SK-N-SH (cell line): ENCODE measurements at regions of chr1 and their contacts with region 1.

Region 1: DNA sequence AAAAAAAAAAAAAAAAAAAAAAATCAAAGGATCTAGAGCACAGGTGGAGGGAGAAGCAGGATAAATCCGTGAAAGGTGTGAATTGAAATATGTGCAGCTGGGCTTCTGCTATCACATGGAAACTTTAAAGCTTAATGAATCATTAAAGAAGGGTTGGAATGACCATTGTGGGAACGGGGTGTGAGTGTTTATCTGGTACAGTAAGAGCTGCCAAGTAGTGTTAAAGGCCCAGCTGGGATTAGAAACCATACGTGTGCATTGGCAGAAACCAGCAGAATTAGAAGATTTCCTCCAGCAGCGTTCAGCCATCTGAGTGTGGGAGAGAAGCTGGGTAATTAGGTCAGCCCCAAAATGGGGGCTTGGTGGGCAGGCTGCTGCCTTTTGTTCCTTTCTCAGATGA is 13.5 kb downstream of the FALEC start:
- DNase-seq: no peak
- H3K4me3 ChIP-seq: no peak overlapping the region
- H3K27ac ChIP-seq: no peak overlapping the region
- H3K4me1 ChIP-seq: peaks cover 4 to 5% of the 10 kb centered on the region in 2 experiments; a peak in 1 of 4 replicates
- H3K27me3 ChIP-seq: no peaks in the 10 kb centered on the region
- CTCF ChIP-seq: no peak
- EP300 ChIP-seq: no peak
- RAD21 ChIP-seq: no peak

Region 2: DNA sequence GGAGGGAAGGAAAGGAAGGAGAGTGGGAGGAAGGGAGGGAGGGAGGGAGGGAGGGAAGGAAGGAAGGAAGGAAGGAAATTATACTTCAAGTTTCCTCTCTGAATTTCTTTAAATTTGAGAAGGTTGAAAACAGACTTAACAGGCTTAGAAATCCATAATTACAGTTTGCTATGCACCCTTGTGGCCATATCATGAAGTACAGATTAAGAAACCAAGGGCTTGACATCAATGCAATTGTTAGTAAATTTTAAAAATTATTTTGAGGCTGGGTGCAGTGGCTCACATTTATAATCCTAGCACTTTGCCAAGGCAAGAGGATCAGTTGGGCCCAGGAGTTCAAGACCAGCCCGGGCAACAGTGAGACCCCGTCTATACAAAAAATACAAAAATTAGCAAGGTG is 307.5 kb before region 1 on chr1:
- CTCF ChIA-PET with region 1: no interaction called
- POLR2A ChIA-PET with region 1: no interaction called
- DNase-seq: peak; percentile 35
- H3K4me3 ChIP-seq: no peak overlapping the region; a peak in 1 of 4 replicates
- H3K27ac ChIP-seq: no peak overlapping the region
- H3K4me1 ChIP-seq: no peaks in the 10 kb centered on the region
- H3K27me3 ChIP-seq: no peaks in the 10 kb centered on the region
- CTCF ChIP-seq: peak; percentile 63
- EP300 ChIP-seq: no peak
- RAD21 ChIP-seq: peak; percentile 26

Region 3: DNA sequence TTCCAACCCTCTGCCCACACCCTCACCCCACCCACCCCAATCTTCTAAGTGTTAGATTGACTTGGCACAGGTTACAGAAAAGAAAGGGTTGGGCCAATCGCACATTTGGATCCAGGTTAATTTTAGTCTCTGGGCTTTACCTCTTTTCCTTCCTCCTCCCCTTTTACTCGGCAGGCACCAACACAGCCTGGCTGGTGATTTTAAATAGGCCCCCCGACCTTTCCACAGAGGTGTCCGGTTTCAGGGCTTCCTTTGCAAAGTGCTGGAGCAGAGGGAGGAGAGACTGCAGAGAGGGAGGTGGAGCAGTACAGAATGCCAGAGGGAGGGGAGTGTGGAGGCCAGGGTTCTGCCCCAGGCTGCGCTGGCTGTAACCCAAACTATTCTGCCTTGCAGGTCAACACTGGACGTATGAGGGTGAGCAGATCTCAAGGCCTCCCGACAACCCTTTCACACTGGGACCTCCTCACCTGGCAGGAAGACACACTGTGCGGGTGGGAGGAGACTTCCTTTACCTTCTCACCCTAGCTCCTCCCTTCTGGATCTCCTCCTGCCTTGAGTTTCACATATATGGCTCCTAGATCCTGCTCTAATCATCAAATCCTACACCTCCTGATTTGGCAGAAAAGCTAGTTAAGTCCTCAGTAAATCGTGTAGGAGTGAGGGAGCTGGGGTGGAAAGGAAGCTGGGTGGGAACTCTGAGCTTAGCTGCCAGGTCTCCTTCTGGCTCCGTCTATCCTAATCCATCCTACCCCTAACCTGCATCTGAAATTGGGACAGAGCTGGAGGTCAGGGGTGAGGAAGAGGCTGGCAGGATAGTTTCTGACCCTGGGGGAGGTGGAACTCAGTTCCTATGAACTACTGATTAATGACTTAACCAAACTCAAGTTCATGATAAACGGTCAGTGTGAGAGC is 269.0 kb before region 1 on chr1:
- CTCF ChIA-PET with region 1: interaction called, 11 read pairs
- POLR2A ChIA-PET with region 1: no interaction called
- DNase-seq: peak; percentile 21
- H3K4me3 ChIP-seq: no peak overlapping the region
- H3K27ac ChIP-seq: peak overlapping the region in 1 of 2 experiments; percentile 17; a peak in 1 of 4 replicates
- H3K4me1 ChIP-seq: peaks cover 17 to 21% of the 10 kb centered on the region in 2 experiments; a peak in 3 of 4 replicates
- H3K27me3 ChIP-seq: no peaks in the 10 kb centered on the region
- CTCF ChIP-seq: no peak
- EP300 ChIP-seq: no peak
- RAD21 ChIP-seq: no peak

Region 4: GRCh38 chr1:150464422-150464826 is 64.6 kb before region 1 on chr1:
- CTCF ChIA-PET with region 1: interaction called, 21 read pairs
- POLR2A ChIA-PET with region 1: no interaction called
- DNase-seq: peak; percentile 75
- H3K4me3 ChIP-seq: no peak overlapping the region
- H3K27ac ChIP-seq: no peak overlapping the region
- H3K4me1 ChIP-seq: no peaks in the 10 kb centered on the region
- H3K27me3 ChIP-seq: no peaks in the 10 kb centered on the region
- CTCF ChIP-seq: peak; percentile 82
- EP300 ChIP-seq: no peak
- RAD21 ChIP-seq: peak; percentile 80

Region 5: DNA sequence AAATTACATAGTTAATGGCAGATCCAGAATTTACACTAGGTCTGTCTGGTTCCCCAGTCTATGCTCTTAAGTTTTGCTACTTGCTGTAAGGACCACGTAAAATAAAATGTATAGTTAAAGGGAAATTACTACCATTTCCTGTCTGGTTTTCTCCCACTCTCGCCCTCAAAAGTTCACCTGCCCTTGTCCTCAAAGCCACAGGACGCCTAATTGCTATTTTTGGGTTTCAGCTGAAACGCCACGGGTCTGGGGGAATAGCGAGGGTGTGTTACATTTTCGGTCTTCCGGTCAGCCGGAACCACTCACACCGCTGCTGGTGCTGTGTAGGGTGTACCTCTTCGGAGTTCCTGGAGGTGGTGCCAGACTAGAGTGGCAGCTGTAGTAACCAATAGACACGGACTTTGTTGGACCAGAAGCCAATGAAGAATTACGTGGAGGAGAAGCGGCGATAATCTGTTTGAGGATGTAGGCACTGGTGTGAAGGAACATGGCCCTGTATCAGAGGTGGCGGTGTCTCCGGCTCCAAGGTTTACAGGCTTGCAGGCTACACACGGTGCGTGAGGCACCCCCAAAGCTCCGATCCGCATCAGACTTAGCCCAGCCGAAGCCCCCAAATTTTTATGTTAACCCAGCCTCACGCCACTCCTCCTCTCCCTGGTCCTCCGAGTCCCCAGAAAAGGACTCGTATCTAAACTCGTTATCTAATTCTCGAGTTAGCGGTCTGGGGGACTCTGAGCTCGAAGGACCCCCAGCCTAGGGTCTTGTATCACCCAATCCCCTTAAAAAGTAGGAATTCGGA is 41.9 kb before region 1 on chr1 and contains the start of gene TARS2:
- CTCF ChIA-PET with region 1: interaction called, 12 read pairs
- POLR2A ChIA-PET with region 1: no interaction called
- DNase-seq: peak; percentile 93
- H3K4me3 ChIP-seq: peak within 1 kb of the TSS; percentile 77 to 87
- H3K27ac ChIP-seq: peak within 1 kb of the TSS; percentile 48 to 77; a peak in 3 of 4 replicates
- H3K4me1 ChIP-seq: peaks cover 5 to 12% of the 10 kb centered on the region in 2 experiments; a peak in 2 of 4 replicates
- H3K27me3 ChIP-seq: no peaks in the 10 kb centered on the region
- CTCF ChIP-seq: no peak
- EP300 ChIP-seq: no peak
- RAD21 ChIP-seq: no peak
- polyA plus RNA-seq, gene TARS2: 22.2 and 22.7 TPM in 2 replicates

Region 6: DNA sequence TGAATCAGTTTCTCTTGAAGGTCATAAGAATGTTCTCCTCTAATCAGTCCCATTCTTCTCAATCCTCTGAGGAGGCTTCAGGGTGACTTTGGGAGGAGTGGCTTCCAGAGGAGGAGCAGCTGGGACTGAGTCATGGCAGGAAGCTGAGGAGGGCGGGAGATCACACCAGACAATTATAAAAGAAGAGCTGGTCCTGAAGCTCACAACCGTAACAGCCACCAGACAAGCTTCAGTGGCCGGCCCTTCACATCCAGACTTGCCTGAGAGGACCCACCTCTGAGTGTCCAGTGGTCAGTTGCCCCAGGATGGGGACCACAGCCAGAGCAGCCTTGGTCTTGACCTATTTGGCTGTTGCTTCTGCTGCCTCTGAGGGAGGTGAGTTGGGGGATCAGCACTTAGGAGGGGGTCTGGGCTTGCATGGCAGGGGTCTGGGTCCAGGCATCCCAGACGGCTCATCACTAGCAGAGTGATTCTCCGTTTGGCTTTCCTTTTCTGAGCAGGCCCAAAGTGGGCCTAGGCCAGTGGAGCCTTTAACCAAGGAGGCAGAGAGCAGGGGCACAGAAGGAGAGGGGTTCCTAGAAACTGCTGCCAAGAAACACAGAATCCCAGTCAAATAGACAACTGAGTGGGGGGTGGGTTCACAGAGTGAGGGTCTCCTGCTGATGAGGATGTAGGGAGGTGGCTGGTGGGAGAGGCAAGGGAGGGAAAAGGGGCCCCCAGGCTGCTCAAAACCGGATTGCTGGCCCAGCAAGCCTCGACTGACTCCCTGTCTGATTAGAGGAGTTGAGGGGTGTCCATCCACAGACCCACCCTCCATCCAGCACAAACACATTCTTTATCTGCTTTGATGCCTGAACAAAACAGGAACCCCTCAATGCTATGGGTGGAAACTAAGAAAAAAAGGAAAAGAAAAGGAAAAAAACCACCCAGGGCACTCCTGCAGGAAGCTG is 20.8 kb before region 1 on chr1 and contains the start of gene ECM1:
- CTCF ChIA-PET with region 1: interaction called, 29 read pairs
- POLR2A ChIA-PET with region 1: no interaction called
- DNase-seq: no peak
- H3K4me3 ChIP-seq: peak within 1 kb of the TSS; percentile 7 to 55; a peak in 3 of 4 replicates
- H3K27ac ChIP-seq: peak within 1 kb of the TSS; percentile 63 to 75
- H3K4me1 ChIP-seq: peaks cover 6 to 13% of the 10 kb centered on the region in 2 experiments; a peak in 2 of 4 replicates
- H3K27me3 ChIP-seq: no peaks in the 10 kb centered on the region
- CTCF ChIP-seq: no peak
- EP300 ChIP-seq: no peak
- RAD21 ChIP-seq: no peak
- polyA plus RNA-seq, gene ECM1: 20.2 and 32.3 TPM in 2 replicates

Region 7: GRCh38 chr1:150515328-150516048 is 13.5 kb before region 1 on chr1 and contains the start of gene FALEC:
- CTCF ChIA-PET with region 1: interaction called, 34 read pairs
- POLR2A ChIA-PET with region 1: interaction called, 5 read pairs
- DNase-seq: peak; percentile 99
- H3K4me3 ChIP-seq: peak within 1 kb of the TSS; percentile 59 to 70
- H3K27ac ChIP-seq: peak within 1 kb of the TSS; percentile 58 to 80
- H3K4me1 ChIP-seq: peaks cover 2 to 4% of the 10 kb centered on the region in 2 experiments; a peak in 1 of 4 replicates
- H3K27me3 ChIP-seq: no peaks in the 10 kb centered on the region
- CTCF ChIP-seq: no peak
- EP300 ChIP-seq: no peak
- RAD21 ChIP-seq: no peak
- polyA plus RNA-seq, gene FALEC: 0.50 and 0.72 TPM in 2 replicates

Region 8: DNA sequence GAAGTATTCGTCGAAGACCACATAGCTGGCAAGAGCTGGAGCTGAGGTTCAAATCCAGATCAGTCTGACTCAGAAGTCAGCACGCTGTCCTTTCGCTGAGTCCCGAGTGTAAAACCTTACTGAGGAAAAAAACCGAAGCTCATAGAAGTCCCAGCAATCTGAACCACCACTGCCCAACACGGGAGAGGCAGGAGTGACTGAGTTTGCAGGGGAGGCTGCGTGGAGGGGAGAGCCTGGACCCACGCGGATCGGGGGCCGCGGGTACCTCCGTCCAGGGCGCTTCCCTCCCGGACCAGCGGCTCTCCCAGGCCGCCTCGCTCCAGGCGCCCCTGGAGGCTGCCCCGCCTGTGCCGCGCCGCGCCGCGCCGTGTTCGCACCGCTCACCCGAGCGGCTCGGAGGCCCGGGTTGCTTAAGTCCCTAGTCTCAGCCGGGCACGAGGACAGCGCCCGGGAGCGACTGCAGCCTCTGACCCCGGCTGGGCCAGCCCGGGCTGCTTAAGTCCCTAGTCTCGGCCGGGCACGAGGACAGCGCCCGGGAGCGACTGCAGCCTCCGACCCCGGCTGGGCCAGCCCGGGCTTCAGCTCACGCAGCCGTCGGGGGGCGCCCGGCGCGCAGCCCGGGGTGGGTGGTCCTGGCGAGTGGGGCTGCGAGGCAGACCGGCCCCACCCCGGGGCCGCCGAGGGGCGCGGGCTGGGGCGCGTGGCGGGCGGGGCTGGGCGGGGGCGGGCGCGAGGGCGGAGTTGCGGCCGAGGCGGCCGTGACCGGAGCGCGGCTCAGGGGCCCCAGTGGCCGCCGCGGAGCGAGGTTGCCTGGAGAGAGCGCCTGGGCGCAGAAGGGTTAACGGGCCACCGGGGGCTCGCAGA is 19.8 kb after region 1 on chr1 and contains the start of gene ADAMTSL4:
- CTCF ChIA-PET with region 1: interaction called, 69 read pairs
- POLR2A ChIA-PET with region 1: no interaction called
- DNase-seq: peak; percentile 90
- H3K4me3 ChIP-seq: peak within 1 kb of the TSS; percentile 51 to 61
- H3K27ac ChIP-seq: peak within 1 kb of the TSS in 1 of 2 experiments; percentile 39; a peak in 2 of 4 replicates
- H3K4me1 ChIP-seq: peaks cover 8 to 13% of the 10 kb centered on the region in 2 experiments; a peak in 2 of 4 replicates
- H3K27me3 ChIP-seq: no peaks in the 10 kb centered on the region
- CTCF ChIP-seq: peak; percentile 27; the same call in 1 of the 2 replicates
- EP300 ChIP-seq: no peak
- RAD21 ChIP-seq: no peak
- polyA plus RNA-seq, gene ADAMTSL4: 2.4 and 3.4 TPM in 2 replicates

Region 9: GRCh38 chr1:150730130-150730721 is 201.2 kb after region 1 on chr1:
- CTCF ChIA-PET with region 1: no interaction called
- POLR2A ChIA-PET with region 1: no interaction called
- DNase-seq: no peak
- H3K4me3 ChIP-seq: no peak overlapping the region
- H3K27ac ChIP-seq: no peak overlapping the region
- H3K4me1 ChIP-seq: no peaks in the 10 kb centered on the region
- H3K27me3 ChIP-seq: no peaks in the 10 kb centered on the region
- CTCF ChIP-seq: no peak
- EP300 ChIP-seq: no peak
- RAD21 ChIP-seq: no peak